OCI-LY7 (cell line): ENCODE measurements at regions of chr13 and their contacts with region 1.

Region 1: GRCh38 chr13:77136902-77137420 is 110.0 kb upstream of the FBXL3 start:
- DNase-seq: no peak
- H3K4me3 ChIP-seq: no peak overlapping the region
- H3K27ac ChIP-seq: no peak overlapping the region
- H3K4me1 ChIP-seq: no peaks in the 10 kb centered on the region
- CTCF ChIP-seq: no peak

Region 2: GRCh38 chr13:77113496-77113895 is 23.5 kb before region 1 on chr13:
- CTCF ChIA-PET with region 1: no interaction called
- POLR2A ChIA-PET with region 1: interaction called, 32 read pairs
- intact Hi-C with region 1: no loop called
- DNase-seq: no peak
- H3K4me3 ChIP-seq: no peak overlapping the region
- H3K27ac ChIP-seq: no peak overlapping the region
- H3K4me1 ChIP-seq: no peaks in the 10 kb centered on the region
- CTCF ChIP-seq: no peak